CD4-positive, alpha-beta memory T cell (primary cell): ENCODE measurements at regions of chr12 and their contacts with region 1.

Region 1: GRCh38 chr12:106357549-106358395 is at the start of gene POLR3B:
- DNase-seq: peak; percentile 96 to 98 (median 97)
- H3K4me3 ChIP-seq: peak within 1 kb of the TSS; percentile 77 to 87
- H3K4me3 Mint-ChIP-seq: peak within 1 kb of the TSS; percentile 86 to 95 (median 94)
- H3K27ac ChIP-seq: peak within 1 kb of the TSS; percentile 68
- H3K27ac Mint-ChIP-seq: peak within 1 kb of the TSS; percentile 92 to 97 (median 95)
- H3K4me1 ChIP-seq: peaks cover 20% of the 10 kb centered on the region
- H3K4me1 Mint-ChIP-seq: peaks cover 10 to 20% (median 16%) of the 10 kb centered on the region in 4 donors
- H3K27me3 ChIP-seq: no peaks in the 10 kb centered on the region
- H3K27me3 Mint-ChIP-seq: no peaks in the 10 kb centered on the region
- total RNA-seq, gene POLR3B: 6.6 to 7.5 TPM

Region 2: GRCh38 chr12:106030210-106031175 is 327.3 kb before region 1 on chr12:
- CTCF ChIA-PET with region 1: no interaction called
- POLR2A ChIA-PET with region 1: no interaction called
- intact Hi-C with region 1: no loop called
- DNase-seq: no peak
- H3K4me3 ChIP-seq: no peak overlapping the region
- H3K4me3 Mint-ChIP-seq: no peak overlapping the region
- H3K27ac ChIP-seq: no peak overlapping the region
- H3K27ac Mint-ChIP-seq: no peak overlapping the region
- H3K4me1 ChIP-seq: no peaks in the 10 kb centered on the region
- H3K4me1 Mint-ChIP-seq: peaks cover 0 to 1% (median 0%) of the 10 kb centered on the region in 4 donors
- H3K27me3 ChIP-seq: no peaks in the 10 kb centered on the region
- H3K27me3 Mint-ChIP-seq: peaks cover 6 to 9% of the 10 kb centered on the region in 2 donors

Region 3: DNA sequence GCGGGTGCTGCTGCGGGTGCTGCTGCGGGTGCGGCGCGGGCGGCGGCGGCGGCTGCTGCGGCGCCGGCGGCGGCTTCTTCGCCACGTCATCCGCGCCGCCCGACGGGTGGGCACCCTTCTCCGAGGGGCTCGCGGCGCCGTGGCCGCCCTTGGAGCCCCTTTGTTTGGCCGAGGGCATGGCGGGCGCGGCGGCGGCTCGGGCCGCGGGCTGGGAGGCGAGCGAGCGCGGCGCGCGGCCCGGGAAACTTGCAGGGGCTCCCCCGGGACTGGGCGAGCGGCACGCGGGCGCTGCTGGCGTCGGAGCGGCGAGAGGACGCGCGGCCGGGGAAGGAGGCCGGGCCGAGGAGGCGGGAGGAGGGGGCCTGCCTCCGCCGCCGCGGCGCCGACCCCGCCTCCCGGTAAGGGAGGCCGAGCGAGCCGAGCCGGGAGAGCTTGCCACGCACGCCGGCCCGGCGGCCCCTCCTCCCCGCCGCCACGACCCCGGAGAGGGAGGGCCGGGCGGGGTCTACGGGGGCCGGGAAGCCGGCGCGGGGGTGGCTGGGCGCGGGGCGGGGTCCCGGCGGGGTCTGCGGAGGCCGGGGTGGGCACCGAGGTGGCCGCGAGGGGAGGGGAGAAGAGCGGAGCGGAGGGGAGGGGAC is 110.0 kb before region 1 on chr12 and contains the start of gene CKAP4:
- CTCF ChIA-PET with region 1: interaction called, 3 read pairs
- POLR2A ChIA-PET with region 1: interaction called, 5 read pairs
- intact Hi-C with region 1: loop called (anchors 1 kb)
- DNase-seq: peak; percentile 56 to 65 (median 64)
- H3K4me3 ChIP-seq: peak within 1 kb of the TSS; percentile 32 to 54
- H3K4me3 Mint-ChIP-seq: peak within 1 kb of the TSS; percentile 83 to 90 (median 87)
- H3K27ac ChIP-seq: peak within 1 kb of the TSS; percentile 74
- H3K27ac Mint-ChIP-seq: peak within 1 kb of the TSS; percentile 80 to 98 (median 96)
- H3K4me1 ChIP-seq: peaks cover 34% of the 10 kb centered on the region
- H3K4me1 Mint-ChIP-seq: peaks cover 9 to 43% (median 30%) of the 10 kb centered on the region in 4 donors
- H3K27me3 ChIP-seq: no peaks in the 10 kb centered on the region
- H3K27me3 Mint-ChIP-seq: no peaks in the 10 kb centered on the region
- total RNA-seq, gene CKAP4: 12.5 to 13.0 TPM

Region 4: DNA sequence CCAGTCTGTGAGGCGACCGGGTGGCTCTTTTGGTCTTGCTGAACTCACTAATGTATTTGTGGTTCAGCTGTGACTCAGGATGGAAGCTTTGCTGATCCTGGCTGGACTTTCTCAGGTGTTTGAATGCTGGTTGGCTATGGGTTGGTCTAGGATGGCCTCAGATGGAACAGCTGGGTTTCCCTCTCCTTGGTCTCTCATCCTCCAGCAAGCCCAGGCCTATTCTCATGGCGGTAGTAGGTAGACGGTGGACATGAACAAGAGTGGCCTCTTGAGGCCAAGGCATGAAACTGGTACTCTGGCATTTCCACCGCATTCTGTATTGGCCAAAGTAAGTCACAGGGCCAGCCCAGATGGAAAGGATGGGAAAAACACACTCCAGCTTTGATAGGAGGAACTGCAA is 12.0 kb before region 1 on chr12:
- CTCF ChIA-PET with region 1: interaction called, 18 read pairs
- POLR2A ChIA-PET with region 1: interaction called, 5 read pairs
- intact Hi-C with region 1: no loop called
- DNase-seq: peak in 1 of 5 donors; percentile 9
- H3K4me3 ChIP-seq: no peak overlapping the region
- H3K4me3 Mint-ChIP-seq: no peak overlapping the region
- H3K27ac ChIP-seq: no peak overlapping the region
- H3K27ac Mint-ChIP-seq: peak overlapping the region in 3 of 7 donors; percentile 6 to 48 (median 38)
- H3K4me1 ChIP-seq: no peaks in the 10 kb centered on the region
- H3K4me1 Mint-ChIP-seq: peaks cover 0 to 4% (median under 1%) of the 10 kb centered on the region in 4 donors
- H3K27me3 ChIP-seq: no peaks in the 10 kb centered on the region
- H3K27me3 Mint-ChIP-seq: no peaks in the 10 kb centered on the region

Region 5: DNA sequence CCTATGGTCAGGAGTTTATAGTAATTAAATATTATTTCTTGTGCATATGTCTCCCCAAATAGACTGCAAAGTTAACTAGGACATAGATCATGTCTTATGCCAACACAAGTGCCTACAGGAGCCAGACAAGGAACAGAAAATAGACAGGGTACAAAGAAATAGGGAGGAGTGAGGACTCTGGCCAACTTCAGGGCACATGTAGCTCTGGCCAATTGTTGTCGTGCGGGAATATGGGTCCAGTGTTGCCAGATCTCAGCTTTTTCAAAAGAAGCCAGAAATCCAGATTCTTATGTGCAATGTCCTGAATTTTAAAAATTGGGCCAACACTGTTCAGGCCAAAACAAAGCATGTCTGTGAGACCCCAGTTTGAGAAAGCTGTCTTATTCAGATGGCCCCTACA is 293.8 kb after region 1 on chr12:
- CTCF ChIA-PET with region 1: no interaction called
- POLR2A ChIA-PET with region 1: no interaction called
- intact Hi-C with region 1: no loop called
- DNase-seq: no peak
- H3K4me3 ChIP-seq: no peak overlapping the region
- H3K4me3 Mint-ChIP-seq: no peak overlapping the region
- H3K27ac ChIP-seq: no peak overlapping the region
- H3K27ac Mint-ChIP-seq: no peak overlapping the region
- H3K4me1 ChIP-seq: no peaks in the 10 kb centered on the region
- H3K4me1 Mint-ChIP-seq: peaks cover 0 to 4% (median under 1%) of the 10 kb centered on the region in 4 donors
- H3K27me3 ChIP-seq: no peaks in the 10 kb centered on the region
- H3K27me3 Mint-ChIP-seq: peaks cover 2 to 4% of the 10 kb centered on the region in 2 donors

Region 6: GRCh38 chr12:106919910-106920544 is 562.3 kb after region 1 on chr12:
- CTCF ChIA-PET with region 1: interaction called, 12 read pairs
- POLR2A ChIA-PET with region 1: no interaction called
- intact Hi-C with region 1: loop called (anchors 1 kb)
- DNase-seq: peak in 4 of 5 donors; percentile 28 to 45 (median 40)
- H3K4me3 ChIP-seq: no peak overlapping the region
- H3K4me3 Mint-ChIP-seq: no peak overlapping the region
- H3K27ac ChIP-seq: no peak overlapping the region
- H3K27ac Mint-ChIP-seq: no peak overlapping the region
- H3K4me1 ChIP-seq: peaks cover 7% of the 10 kb centered on the region
- H3K4me1 Mint-ChIP-seq: peaks cover 8 to 9% (median 9%) of the 10 kb centered on the region in 4 donors
- H3K27me3 ChIP-seq: no peaks in the 10 kb centered on the region
- H3K27me3 Mint-ChIP-seq: peaks cover 7 to 8% of the 10 kb centered on the region in 2 donors

Region 7: DNA sequence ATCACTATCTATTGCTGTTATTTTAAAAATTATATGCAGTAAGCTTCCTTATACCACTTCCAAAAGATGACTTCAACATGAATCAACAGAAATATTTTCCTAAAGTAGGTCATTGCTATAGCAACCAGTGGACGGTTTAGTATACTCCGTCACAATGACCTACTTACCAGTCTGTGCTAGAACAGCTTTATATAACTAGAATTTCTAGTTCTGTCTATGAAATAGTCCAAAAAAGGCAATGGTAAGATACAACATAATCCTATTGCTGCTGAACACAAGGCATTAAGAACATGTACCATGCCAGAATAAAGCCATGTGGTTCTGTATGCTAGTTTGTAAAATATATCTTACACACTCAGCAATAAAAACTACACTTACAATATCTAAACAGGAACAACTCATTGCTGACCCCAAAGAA is 669.9 kb after region 1 on chr12:
- CTCF ChIA-PET with region 1: no interaction called
- POLR2A ChIA-PET with region 1: no interaction called
- intact Hi-C with region 1: no loop called
- DNase-seq: peak; percentile 66 to 90 (median 82)
- H3K4me3 ChIP-seq: no peak overlapping the region
- H3K4me3 Mint-ChIP-seq: peak overlapping the region; percentile 26 to 85 (median 74)
- H3K27ac ChIP-seq: peak overlapping the region; percentile 91
- H3K27ac Mint-ChIP-seq: peak overlapping the region; percentile 95 to 100 (median 99)
- H3K4me1 ChIP-seq: peaks cover 75% of the 10 kb centered on the region
- H3K4me1 Mint-ChIP-seq: peaks cover 49 to 82% (median 68%) of the 10 kb centered on the region in 4 donors
- H3K27me3 ChIP-seq: no peaks in the 10 kb centered on the region
- H3K27me3 Mint-ChIP-seq: no peaks in the 10 kb centered on the region